Testis (tissue), 5 donors: ENCODE measurements at regions of chr2 and their contacts with region 1.

Region 1: DNA sequence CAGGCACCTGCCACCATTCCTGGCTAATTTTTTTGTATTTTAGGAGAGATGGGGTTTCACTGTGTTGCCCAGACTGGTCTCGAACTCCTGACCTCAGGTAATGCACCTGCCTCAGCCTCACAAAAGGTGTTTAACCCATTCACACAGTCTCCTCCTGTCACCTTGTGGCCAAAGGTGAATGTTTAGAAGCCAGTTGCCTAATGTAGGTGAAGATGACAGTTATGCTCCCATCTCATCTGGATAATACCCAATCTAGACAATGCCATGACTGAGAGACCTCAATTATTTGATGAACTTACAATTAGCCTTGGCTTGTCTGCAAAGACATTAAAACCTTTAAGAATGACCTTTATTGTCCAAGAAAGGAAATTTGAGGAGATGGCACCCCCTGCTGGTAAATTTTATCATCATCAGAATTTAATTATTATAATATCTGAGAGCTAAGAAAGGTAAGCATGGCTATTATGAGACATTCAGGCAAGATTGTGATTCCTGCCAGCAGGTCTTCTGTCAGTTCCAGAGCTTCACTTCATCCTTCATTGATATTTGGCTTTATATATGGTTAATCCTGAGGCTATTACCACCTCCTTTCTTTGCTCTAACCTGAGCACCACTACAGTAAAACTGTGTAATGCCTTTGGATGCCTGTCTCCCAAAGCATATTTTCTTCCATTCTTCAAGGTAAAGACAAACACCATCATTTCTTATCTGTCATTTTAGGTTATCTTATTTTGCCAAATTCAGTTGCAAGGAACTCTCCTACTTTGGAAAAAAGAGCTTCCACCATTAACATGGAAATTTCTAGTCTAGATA is 117.6 kb downstream of the FAM124B start:
- DNase-seq: no peak
- H3K4me3 ChIP-seq: no peak overlapping the region
- H3K27ac ChIP-seq: no peak overlapping the region
- H3K4me1 ChIP-seq: no peaks in the 10 kb centered on the region
- H3K27me3 ChIP-seq: no peaks in the 10 kb centered on the region
- CTCF ChIP-seq: peak; percentile 61 to 91 (median 73)
- POLR2A ChIP-seq: no peak

Region 2: GRCh38 chr2:223989273-223990232 is 294.8 kb before region 1 on chr2:
- intact Hi-C with region 1: loop called (anchors 5 kb)
- DNase-seq: no peak
- H3K4me3 ChIP-seq: no peak overlapping the region
- H3K27ac ChIP-seq: no peak overlapping the region
- H3K4me1 ChIP-seq: peaks cover 4% of the 10 kb centered on the region
- H3K27me3 ChIP-seq: no peaks in the 10 kb centered on the region
- CTCF ChIP-seq: no peak
- POLR2A ChIP-seq: no peak